ENCODE measurements at regions of chr20 and their contacts with region 1.

Region 1: GRCh38 chr20:2984956-2985661 is 58.3 kb upstream of the GNRH2 start:
- DNase-seq: no peak
- H3K4me3 Mint-ChIP-seq: no peak overlapping the region
- H3K27ac Mint-ChIP-seq: no peak overlapping the region
- H3K4me1 Mint-ChIP-seq: peaks cover 40% of the 10 kb centered on the region
- H3K27me3 Mint-ChIP-seq: no peaks in the 10 kb centered on the region

Region 2: GRCh38 chr20:2873010-2873746 is 111.9 kb before region 1 on chr20 and contains the start of gene PTPRA:
- intact Hi-C with region 1: loop called (anchors 5 kb)
- DNase-seq: peak; percentile 90
- H3K4me3 Mint-ChIP-seq: peak within 1 kb of the TSS; percentile 88
- H3K27ac Mint-ChIP-seq: peak within 1 kb of the TSS; percentile 94
- H3K4me1 Mint-ChIP-seq: peaks cover 45% of the 10 kb centered on the region
- H3K27me3 Mint-ChIP-seq: no peaks in the 10 kb centered on the region
- total RNA-seq, gene PTPRA: 92.0 TPM in 2 replicates

Region 3: GRCh38 chr20:2955257-2955970 is 29.7 kb before region 1 on chr20:
- intact Hi-C with region 1: loop called (anchors 1 kb)
- DNase-seq: no peak
- H3K4me3 Mint-ChIP-seq: no peak overlapping the region
- H3K27ac Mint-ChIP-seq: peak overlapping the region; percentile 85
- H3K4me1 Mint-ChIP-seq: peaks cover 26% of the 10 kb centered on the region
- H3K27me3 Mint-ChIP-seq: no peaks in the 10 kb centered on the region

Region 4: GRCh38 chr20:3045816-3046676 is 60.9 kb after region 1 on chr20 and contains the start of gene MRPS26:
- intact Hi-C with region 1: loop called (anchors 2 kb)
- DNase-seq: peak; percentile 81
- H3K4me3 Mint-ChIP-seq: peak within 1 kb of the TSS; percentile 86
- H3K27ac Mint-ChIP-seq: peak within 1 kb of the TSS; percentile 81
- H3K4me1 Mint-ChIP-seq: peaks cover 13% of the 10 kb centered on the region
- H3K27me3 Mint-ChIP-seq: no peaks in the 10 kb centered on the region
- total RNA-seq, gene MRPS26: 143 and 148 TPM in 2 replicates

Region 5: GRCh38 chr20:3204124-3204822 is 219.2 kb after region 1 on chr20 and contains the start of gene DDRGK1:
- intact Hi-C with region 1: no loop called
- DNase-seq: peak; percentile 87
- H3K4me3 Mint-ChIP-seq: peak within 1 kb of the TSS; percentile 99
- H3K27ac Mint-ChIP-seq: peak within 1 kb of the TSS; percentile 98
- H3K4me1 Mint-ChIP-seq: peaks cover 14% of the 10 kb centered on the region
- H3K27me3 Mint-ChIP-seq: no peaks in the 10 kb centered on the region
- total RNA-seq, gene DDRGK1: 61.8 and 69.2 TPM in 2 replicates

Measured in activated T-helper 2 cell treated with anti-CD3 and anti-CD28 coated beads, Interferon-gamma antibody, Interleukin-2, Interleukin-4, amounts not matched to agents 10 μg/mL and 5 μg/mL and 100 μg/mL, durations not matched to agents 14 hours and 24 hours and 36 hours (primary cell).